Activated T-helper 1 cell treated with anti-CD3 and anti-CD28 coated beads, Interleukin-12 subunit alpha, Interleukin-12 subunit beta, Interleukin-2, Interleukin-4 antibody, amounts not matched to agents 30 ng/mL and 10 ng/mL and 1 ng/mL, durations not matched to agents 14 hours and 24 hours and 36 hours (primary cell): ENCODE measurements at regions of chr20 and their contacts with region 1.

Region 1: GRCh38 chr20:34022154-34022838 is 28.6 kb downstream of the RALY start:
- DNase-seq: no peak
- H3K4me3 Mint-ChIP-seq: no peak overlapping the region
- H3K27ac Mint-ChIP-seq: peak overlapping the region; percentile 7
- H3K4me1 Mint-ChIP-seq: peaks cover 36% of the 10 kb centered on the region
- H3K27me3 Mint-ChIP-seq: no peaks in the 10 kb centered on the region

Region 2: DNA sequence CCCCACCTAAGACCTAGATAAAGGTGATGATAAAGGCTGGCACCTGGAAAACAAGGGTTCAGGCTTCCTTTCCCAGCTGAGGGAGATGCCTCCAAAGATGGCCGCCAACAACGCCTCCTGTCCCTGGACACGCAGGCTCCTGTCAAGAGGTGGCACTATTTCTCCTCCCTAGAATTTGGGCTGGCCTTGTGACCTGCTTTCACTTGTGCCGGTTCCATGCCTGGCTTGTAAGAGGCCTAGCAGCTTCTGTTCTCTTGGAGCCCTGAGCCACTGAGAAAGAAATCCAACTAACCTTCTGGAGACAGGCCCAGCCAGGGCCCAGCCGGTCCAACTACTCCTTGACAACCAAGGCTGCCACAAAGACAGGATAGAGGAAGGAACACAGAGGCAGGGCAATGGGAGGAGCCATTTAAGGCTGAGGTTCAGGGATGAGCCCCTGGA is 88.8 kb before region 1 on chr20:
- intact Hi-C with region 1: loop called (anchors 1 kb)
- DNase-seq: peak; percentile 42
- H3K4me3 Mint-ChIP-seq: no peak overlapping the region
- H3K27ac Mint-ChIP-seq: no peak overlapping the region
- H3K4me1 Mint-ChIP-seq: no peaks in the 10 kb centered on the region
- H3K27me3 Mint-ChIP-seq: peaks cover 3% of the 10 kb centered on the region

Region 3: GRCh38 chr20:33947709-33948295 is 74.5 kb before region 1 on chr20:
- intact Hi-C with region 1: loop called (anchors 1 kb)
- DNase-seq: peak; percentile 9
- H3K4me3 Mint-ChIP-seq: no peak overlapping the region
- H3K27ac Mint-ChIP-seq: no peak overlapping the region
- H3K4me1 Mint-ChIP-seq: no peaks in the 10 kb centered on the region
- H3K27me3 Mint-ChIP-seq: peaks cover 4% of the 10 kb centered on the region